ENCODE measurements at regions of chr17 and their contacts with region 1.

Region 1: DNA sequence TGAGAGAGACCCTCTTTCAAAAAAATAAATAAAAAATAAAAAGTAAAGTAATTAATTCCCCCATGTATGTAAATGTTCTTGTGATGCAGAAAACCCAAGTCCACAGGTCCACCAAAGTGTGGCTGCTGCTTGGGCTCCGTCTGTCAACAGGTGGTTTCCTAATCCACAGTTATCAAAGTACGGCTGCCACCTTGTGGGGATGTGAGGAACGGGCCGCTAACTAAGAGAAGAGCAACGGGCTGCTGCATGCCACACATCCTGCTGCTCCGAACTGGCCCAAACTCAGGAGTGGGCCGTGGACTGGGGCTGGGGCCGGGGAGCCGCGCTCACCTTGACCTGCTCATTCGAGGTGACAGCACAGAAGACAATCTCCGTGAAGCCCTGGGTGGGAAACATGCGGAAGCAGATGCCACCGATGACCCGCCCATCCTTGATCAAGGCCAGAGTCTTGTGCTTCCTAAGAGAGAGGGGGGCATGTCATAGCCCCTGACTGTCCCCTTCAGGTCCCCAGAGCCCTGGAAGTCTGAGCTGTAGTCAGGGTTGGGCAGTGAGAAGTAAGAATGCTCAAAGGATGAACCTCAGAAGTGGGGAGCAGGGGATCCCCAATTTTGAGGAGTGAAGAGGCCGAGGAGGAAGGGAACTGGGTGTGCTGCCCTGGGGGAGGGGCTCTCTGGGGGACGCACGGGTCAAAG is 4.3 kb downstream of the KAT2A start:
- DNase-seq: peak; percentile 96
- H3K4me3 ChIP-seq: no peak overlapping the region
- H3K27ac ChIP-seq: no peak overlapping the region
- H3K4me1 ChIP-seq: peaks cover 28 to 56% (median 44%) of the 10 kb centered on the region in 4 donors
- H3K27me3 ChIP-seq: no peaks in the 10 kb centered on the region
- CTCF ChIP-seq: peak; percentile 77 to 88 (median 85)
- EP300 ChIP-seq: no peak
- POLR2A ChIP-seq: no peak

Region 2: GRCh38 chr17:41910701-41911391 is 206.0 kb before region 1 on chr17:
- intact Hi-C with region 1: no loop called
- DNase-seq: no peak
- H3K4me3 ChIP-seq: no peak overlapping the region
- H3K27ac ChIP-seq: no peak overlapping the region
- H3K4me1 ChIP-seq: peaks cover 0 to 19% (median 9%) of the 10 kb centered on the region in 4 donors
- H3K27me3 ChIP-seq: no peaks in the 10 kb centered on the region
- CTCF ChIP-seq: no peak
- EP300 ChIP-seq: no peak
- POLR2A ChIP-seq: no peak

Region 3: GRCh38 chr17:41966463-41967140 is 150.2 kb before region 1 on chr17 and contains the start of gene CNP:
- intact Hi-C with region 1: loop called (anchors 5 kb)
- DNase-seq: peak; percentile 95
- H3K4me3 ChIP-seq: peak within 1 kb of the TSS; percentile 91 to 99 (median 95)
- H3K27ac ChIP-seq: peak within 1 kb of the TSS; percentile 92 to 93 (median 92)
- H3K4me1 ChIP-seq: peaks cover 23 to 66% (median 63%) of the 10 kb centered on the region in 4 donors
- H3K27me3 ChIP-seq: no peaks in the 10 kb centered on the region
- CTCF ChIP-seq: peak in 1 of 3 experiments; percentile 27
- EP300 ChIP-seq: no peak
- POLR2A ChIP-seq: peak; percentile 57
- total RNA-seq, gene CNP: 68.9 to 101 (median 78.5) TPM

Region 4: GRCh38 chr17:42010898-42011516 is 105.8 kb before region 1 on chr17:
- intact Hi-C with region 1: no loop called
- DNase-seq: no peak
- H3K4me3 ChIP-seq: no peak overlapping the region
- H3K27ac ChIP-seq: peak overlapping the region in 2 of 4 donors; percentile 10
- H3K4me1 ChIP-seq: peaks cover 72 to 95% (median 84%) of the 10 kb centered on the region in 4 donors
- H3K27me3 ChIP-seq: no peaks in the 10 kb centered on the region
- CTCF ChIP-seq: no peak
- EP300 ChIP-seq: no peak
- POLR2A ChIP-seq: no peak

Region 5: DNA sequence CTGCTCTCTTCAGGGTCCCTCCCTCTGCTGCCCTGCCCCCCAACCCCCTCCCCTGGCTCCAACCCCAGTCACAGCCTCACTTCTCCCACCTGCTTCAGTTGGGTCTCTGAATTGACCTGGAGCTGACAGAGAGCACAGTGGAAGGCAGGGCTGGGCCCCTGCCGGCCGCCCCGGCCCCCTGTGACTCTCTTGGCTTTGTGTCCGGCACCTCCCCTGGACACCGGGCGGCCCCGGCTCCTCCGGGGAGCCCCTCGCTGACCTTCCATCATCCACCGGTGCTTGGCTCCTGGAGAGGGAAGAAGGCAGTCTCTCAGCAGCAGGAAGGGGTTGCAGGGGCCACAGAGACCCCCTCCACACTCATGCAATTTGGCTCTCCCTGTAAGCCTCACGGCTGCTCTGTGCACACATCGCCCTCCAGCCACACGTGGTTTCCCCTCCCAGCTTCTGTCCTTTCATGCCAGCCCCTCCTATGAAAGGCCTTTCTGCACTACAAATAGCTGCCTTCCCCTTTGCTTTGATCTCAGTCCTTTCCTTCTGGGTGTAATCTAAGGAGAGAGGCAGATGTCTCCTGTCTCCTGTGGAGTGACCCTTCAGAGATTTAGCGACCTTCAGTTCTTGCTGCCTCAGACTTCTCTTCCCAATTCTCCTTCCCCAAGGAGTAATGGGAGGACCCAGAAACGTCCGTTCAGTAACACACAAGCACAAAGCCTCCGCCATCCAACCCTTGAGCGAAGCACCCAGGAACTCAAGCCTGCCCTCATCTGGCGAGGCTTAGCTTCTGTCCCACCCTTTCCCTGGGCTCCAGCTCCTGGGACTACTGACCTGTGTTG is 88.7 kb before region 1 on chr17:
- intact Hi-C with region 1: loop called (anchors 2 kb)
- DNase-seq: no peak
- H3K4me3 ChIP-seq: no peak overlapping the region
- H3K27ac ChIP-seq: no peak overlapping the region
- H3K4me1 ChIP-seq: peaks cover 18 to 27% (median 19%) of the 10 kb centered on the region in 4 donors
- H3K27me3 ChIP-seq: peaks cover 0 to 36% (median 7%) of the 10 kb centered on the region in 4 donors
- CTCF ChIP-seq: no peak
- EP300 ChIP-seq: no peak
- POLR2A ChIP-seq: no peak

Region 6: DNA sequence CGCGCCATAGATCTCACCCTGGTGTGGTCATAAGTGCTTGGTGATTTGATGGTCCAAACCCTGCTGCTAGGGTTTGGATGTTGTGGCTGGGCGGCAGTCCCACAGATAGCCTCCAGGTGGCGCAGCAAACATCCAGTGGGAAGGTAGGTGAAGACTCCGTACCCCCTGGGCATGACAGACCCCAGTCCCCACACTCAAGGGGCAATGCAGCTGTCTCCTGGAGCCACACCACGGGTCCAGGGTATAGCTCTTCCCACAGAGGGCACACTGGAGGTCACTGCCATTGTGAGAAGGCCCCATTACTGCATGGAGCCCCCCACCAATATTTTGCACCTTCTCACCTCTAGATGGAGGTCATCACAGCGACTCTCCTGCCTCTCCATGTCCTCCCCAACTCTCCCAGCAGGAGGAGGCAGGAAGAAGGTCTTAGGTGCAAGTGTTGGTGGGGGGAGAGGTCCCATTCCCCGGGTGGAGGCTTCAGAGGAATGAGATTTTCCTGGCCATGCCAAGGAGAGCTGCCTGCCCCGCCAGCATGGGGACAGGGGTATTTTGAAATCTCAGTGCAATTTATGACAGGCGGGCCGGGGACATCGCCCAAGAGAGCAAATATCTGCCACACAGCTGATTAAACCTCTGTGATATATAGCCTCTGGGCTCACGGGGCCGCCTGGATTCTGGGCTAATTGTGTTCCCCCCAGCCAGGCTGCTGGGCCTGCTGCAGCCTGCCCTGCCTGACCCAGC is 49.3 kb before region 1 on chr17:
- intact Hi-C with region 1: loop called (anchors 5 kb)
- DNase-seq: peak; percentile 93
- H3K4me3 ChIP-seq: no peak overlapping the region
- H3K27ac ChIP-seq: no peak overlapping the region
- H3K4me1 ChIP-seq: peaks cover 6 to 9% (median 8%) of the 10 kb centered on the region in 4 donors
- H3K27me3 ChIP-seq: peaks cover 4 to 47% (median 12%) of the 10 kb centered on the region in 4 donors
- CTCF ChIP-seq: peak; percentile 81 to 93 (median 84)
- EP300 ChIP-seq: no peak
- POLR2A ChIP-seq: no peak

Region 7: DNA sequence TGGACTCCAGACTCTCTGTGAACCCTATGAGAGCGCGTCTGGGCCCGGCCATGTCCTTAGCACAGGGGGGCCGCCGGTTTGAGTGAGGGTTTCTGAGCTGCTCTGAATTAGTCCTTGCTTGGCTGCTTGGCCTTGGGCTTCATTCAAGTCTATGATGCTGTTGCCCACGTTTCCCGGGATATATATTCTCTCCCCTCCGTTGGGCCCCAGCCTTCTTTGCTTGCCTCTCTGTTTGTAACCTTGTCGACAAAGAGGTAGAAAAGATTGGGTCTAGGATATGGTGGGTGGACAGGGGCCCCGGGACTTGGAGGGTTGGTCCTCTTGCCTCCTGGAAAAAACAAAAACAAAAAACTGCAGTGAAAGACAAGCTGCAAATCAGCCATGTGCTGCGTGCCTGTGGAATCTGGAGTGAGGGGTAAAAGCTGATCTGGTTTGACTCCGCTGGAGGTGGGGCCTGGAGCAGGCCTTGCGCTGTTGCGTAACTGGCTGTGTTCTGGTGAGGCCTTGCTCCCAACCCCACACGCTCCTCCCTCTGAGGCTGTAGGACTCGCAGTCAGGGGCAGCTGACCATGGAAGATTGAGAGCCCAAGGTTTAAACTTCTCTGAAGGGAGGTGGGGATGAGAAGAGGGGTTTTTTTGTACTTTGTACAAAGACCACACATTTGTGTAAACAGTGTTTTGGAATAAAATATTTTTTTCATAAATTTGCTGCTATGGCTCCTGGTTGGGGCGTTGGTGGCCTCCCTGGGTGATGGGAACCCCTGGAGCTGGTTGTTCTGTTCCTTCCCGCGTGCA is 194.6 kb after region 1 on chr17:
- intact Hi-C with region 1: no loop called
- DNase-seq: no peak
- H3K4me3 ChIP-seq: peak overlapping the region; percentile 27 to 46 (median 42)
- H3K27ac ChIP-seq: peak overlapping the region; percentile 85 to 94 (median 88)
- H3K4me1 ChIP-seq: peaks cover 28 to 55% (median 49%) of the 10 kb centered on the region in 4 donors
- H3K27me3 ChIP-seq: peaks cover 0 to 4% (median 0%) of the 10 kb centered on the region in 4 donors
- CTCF ChIP-seq: no peak
- EP300 ChIP-seq: no peak
- POLR2A ChIP-seq: no peak

Region 8: GRCh38 chr17:42438600-42439567 is 322.0 kb after region 1 on chr17:
- intact Hi-C with region 1: no loop called
- DNase-seq: no peak
- H3K4me3 ChIP-seq: no peak overlapping the region
- H3K27ac ChIP-seq: no peak overlapping the region
- H3K4me1 ChIP-seq: peaks cover 8 to 17% (median 8%) of the 10 kb centered on the region in 4 donors
- H3K27me3 ChIP-seq: no peaks in the 10 kb centered on the region
- CTCF ChIP-seq: peak in 1 of 3 experiments; percentile 40
- EP300 ChIP-seq: no peak
- POLR2A ChIP-seq: no peak

Measured in esophagus muscularis mucosa (tissue), 4 donors.